ENCODE measurements at regions of chr1 and their contacts with region 1.

Region 1: GRCh38 chr1:67561704-67562113 is 123.3 kb upstream of the GADD45A start:
- DNase-seq: no peak
- H3K4me3 ChIP-seq: no peak overlapping the region
- H3K27me3 ChIP-seq: no peaks in the 10 kb centered on the region
- CTCF ChIP-seq: peak; percentile 90

Region 2: DNA sequence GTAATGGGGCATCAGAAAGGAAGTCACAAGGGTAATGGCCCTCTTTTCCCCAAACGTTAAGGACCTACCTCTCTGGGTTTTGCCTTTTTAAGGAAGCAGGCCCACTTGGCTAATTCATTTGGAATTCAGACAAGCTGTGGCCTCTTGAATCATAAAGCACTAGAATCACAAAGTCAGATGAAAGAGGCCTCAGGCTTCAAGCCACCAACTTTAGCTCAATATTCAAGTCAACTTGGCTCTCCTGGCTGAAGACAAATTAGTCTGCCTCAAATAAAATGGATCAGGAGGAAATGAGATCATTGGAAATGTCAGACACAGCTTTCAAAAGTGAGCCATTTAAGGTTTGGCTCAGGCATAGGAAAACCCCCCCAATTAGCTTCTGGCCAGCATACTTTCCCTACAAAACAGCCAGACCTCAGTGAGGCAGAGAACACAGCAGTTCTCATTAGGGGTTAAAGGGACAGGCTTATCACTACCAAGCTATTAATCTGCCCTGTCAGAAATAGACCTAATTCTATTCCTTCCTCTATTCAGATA is 542.0 kb before region 1 on chr1:
- CTCF ChIA-PET with region 1: no interaction called
- POLR2A ChIA-PET with region 1: no interaction called
- DNase-seq: peak; percentile 78
- H3K4me3 ChIP-seq: no peak overlapping the region
- H3K27me3 ChIP-seq: no peaks in the 10 kb centered on the region
- CTCF ChIP-seq: no peak

Region 3: DNA sequence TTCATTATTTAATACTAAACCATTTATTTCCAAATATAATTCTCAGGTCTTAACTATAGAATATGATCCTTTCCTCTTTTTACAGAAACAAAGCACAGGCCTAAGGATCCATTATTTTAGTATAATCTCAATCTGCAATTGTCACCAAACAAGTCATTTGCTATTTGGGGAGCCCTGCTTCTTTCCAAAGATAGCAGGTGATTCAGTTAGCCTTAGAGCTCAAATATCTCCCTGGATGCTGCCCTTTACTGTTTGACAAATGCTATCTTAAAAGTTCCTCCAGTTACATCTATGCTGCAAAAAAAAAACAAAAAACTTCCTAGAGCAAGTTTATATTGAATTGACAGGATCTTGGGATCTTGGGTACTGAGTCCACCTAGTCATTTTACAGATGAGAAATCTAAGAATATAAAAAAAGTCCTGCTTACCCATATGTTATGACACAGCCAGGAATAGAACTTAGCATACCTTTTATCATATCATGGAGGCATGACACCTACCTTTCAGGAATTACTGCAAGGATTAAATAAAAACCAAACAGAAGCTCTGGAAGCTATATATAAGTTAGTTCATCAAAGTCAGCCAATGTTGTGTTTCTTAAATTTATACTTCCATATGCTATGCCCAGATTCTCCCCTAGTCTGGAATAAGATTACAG is 140.7 kb before region 1 on chr1:
- CTCF ChIA-PET with region 1: no interaction called
- POLR2A ChIA-PET with region 1: no interaction called
- DNase-seq: no peak
- H3K4me3 ChIP-seq: no peak overlapping the region
- H3K27me3 ChIP-seq: no peaks in the 10 kb centered on the region
- CTCF ChIP-seq: no peak

Region 4: DNA sequence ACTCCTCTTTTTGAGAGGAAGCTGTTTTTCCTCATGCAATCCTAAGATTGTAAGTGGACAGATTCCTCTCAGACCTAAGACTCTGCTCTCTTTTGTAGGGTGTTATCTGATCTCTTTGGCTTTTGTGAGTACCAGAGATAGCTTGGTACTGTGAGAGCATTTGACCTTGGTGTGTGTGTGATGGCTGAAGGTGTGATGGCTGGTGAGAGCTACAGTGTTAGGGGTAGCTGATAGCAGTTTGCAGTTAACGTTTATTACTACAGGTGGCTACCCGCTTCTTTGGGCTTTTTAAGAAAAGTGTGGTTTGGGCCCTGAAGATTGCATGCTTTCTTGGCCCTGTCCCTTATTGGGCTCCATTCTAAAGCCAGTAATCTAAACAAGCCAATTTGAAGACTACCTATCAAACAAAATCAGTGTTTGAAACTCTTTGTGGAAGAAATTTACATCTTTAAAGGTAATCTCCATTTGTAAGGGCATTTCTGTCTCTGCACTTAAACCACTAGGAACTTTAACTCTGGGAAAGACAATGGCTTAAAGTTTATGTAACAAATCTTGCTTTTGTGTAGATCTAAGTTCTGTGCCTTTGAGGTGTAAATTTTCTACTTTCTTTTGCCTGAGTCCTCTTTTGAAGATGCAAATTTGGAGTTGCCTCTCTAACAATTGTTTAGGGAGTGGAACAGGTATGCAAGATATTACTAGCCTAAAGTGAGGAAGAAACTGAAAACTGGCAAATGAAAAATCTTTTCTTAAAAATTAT is 46.2 kb before region 1 on chr1:
- CTCF ChIA-PET with region 1: no interaction called
- POLR2A ChIA-PET with region 1: no interaction called
- DNase-seq: no peak
- H3K4me3 ChIP-seq: no peak overlapping the region
- H3K27me3 ChIP-seq: no peaks in the 10 kb centered on the region; the same call in 1 of the 2 replicates
- CTCF ChIP-seq: no peak

Region 5: DNA sequence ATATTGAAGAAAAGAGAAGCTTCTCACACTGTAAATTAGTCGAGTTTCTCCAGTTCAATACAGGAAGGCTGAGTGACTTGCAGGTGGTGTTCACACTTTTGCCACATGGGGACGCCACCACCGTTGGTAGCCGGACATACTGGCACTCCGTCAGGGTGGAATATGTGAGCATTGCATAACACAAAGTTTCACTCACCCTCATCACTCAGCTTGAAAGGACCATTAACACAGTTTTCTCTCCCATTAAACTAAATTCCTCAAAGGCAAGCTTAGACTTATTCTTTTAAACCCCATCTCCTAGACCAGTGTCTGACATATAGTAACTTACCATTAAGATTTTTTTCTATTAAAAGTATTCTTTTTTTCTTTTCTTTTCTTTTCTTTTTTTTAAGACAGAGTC is 26.2 kb before region 1 on chr1:
- CTCF ChIA-PET with region 1: interaction called, 31 read pairs
- POLR2A ChIA-PET with region 1: no interaction called
- DNase-seq: peak; percentile 45
- H3K4me3 ChIP-seq: no peak overlapping the region
- H3K27me3 ChIP-seq: no peaks in the 10 kb centered on the region
- CTCF ChIP-seq: peak; percentile 99

Region 6: DNA sequence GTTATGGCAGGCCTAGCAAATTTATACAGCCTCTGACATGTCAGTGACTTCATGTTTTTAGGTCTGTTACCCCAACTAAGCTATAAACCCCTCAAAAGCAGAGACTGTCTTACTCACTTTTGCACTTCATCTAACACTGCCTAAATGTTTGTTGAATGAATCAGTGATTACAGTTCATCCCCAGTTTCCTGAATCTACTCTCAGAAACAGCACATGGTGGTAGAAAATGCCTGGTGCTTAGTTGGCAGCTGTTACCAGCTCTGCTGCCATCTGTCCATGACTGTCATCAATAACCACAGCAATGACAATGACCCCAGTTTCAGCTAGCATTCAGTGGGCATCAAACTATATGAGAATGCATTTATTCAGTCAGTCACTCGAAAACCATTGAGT is 21.0 kb before region 1 on chr1:
- CTCF ChIA-PET with region 1: interaction called, 31 read pairs
- POLR2A ChIA-PET with region 1: no interaction called
- DNase-seq: no peak
- H3K4me3 ChIP-seq: no peak overlapping the region
- H3K27me3 ChIP-seq: no peaks in the 10 kb centered on the region
- CTCF ChIP-seq: no peak

Region 7: DNA sequence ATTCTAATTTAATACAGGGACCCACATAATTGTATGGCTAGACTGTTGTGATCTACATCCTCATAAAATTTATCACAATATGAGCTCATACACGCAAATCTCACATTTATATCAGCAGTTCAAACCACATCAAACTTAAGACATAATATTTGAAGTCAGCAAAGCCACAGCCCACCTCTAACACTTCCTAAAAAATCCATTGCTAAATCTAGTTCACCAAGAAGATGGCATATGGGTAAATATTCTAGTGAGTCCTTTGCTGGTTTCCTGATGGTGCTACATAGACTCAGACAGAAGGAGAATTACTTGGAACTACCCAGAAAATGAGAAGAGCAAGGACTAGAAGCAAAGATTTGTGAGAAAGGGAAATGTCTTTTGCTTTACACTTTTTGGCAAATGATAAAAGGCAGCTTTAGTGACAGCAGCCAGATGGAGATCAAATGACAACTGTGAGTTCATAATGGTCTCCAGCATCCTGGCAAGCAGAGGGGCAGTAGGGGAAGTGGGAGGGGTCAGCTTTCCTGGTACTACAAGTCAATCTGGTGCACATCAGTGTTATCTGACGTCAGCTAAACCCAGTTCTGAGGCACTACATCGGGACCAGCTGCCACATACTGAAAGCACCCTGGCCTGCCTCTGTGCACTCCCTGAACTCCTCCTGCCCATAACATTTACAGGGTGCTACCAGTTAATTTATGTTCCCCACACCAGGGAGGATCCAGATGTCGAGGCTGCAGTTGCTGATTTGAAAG is 112.7 kb after region 1 on chr1:
- CTCF ChIA-PET with region 1: interaction called, 18 read pairs
- POLR2A ChIA-PET with region 1: no interaction called
- DNase-seq: no peak
- H3K4me3 ChIP-seq: no peak overlapping the region
- H3K27me3 ChIP-seq: no peaks in the 10 kb centered on the region
- CTCF ChIP-seq: no peak

Region 8: DNA sequence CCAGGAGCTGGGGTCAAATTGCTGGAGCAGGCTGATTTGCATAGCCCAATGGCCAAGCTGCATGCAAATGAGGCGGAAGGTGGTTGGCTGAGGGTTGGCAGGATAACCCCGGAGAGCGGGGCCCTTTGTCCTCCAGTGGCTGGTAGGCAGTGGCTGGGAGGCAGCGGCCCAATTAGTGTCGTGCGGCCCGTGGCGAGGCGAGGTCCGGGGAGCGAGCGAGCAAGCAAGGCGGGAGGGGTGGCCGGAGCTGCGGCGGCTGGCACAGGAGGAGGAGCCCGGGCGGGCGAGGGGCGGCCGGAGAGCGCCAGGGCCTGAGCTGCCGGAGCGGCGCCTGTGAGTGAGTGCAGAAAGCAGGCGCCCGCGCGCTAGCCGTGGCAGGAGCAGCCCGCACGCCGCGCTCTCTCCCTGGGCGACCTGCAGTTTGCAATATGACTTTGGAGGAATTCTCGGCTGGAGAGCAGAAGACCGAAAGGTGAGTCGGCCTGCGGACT is 123.4 kb after region 1 on chr1 and contains the start of gene GADD45A:
- CTCF ChIA-PET with region 1: interaction called, 27 read pairs
- POLR2A ChIA-PET with region 1: interaction called, 3 read pairs
- DNase-seq: peak; percentile 97
- H3K4me3 ChIP-seq: peak within 1 kb of the TSS; percentile 85
- H3K27me3 ChIP-seq: no peaks in the 10 kb centered on the region
- CTCF ChIP-seq: no peak
- polyA plus RNA-seq, gene GADD45A: 27.4 and 32.1 TPM in 2 replicates

Region 9: DNA sequence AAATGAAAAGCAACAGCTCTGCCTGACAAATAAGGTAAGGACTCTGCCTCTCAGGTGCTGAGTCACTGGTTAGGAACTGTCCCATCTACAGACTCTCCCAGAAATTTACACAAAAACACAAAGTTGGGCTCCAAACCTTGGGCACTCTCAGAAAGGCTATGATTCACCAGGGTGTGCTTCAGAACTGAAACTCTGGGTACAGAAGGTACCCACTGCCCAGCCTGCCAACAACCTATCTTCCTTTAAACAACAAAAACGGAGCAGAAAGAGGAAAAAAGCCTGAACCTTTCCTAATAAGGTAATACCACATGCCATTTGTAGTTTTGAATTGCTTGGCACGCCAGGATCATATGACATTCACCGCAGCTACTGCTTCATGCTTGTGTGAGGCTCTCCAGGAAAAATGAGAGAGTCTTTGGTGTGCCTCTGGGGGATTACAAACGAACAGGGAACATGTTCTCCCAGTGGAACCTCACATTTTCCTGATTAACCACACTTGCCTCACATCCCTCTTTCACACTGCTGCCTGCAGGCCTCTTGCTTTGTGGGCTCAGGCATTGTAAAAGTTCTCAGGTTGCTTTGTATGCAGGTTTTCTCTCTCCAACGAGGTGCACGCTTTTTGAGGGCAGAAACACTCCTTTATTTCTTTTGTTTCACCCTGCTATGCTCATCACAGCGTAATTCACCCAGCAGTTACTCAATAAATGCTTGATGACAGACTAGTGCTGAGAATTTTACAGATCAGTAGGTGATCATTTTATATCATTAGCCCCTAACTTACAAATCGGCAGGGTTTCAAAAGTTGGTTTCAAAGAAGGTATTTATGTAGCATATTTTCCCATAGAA is 188.4 kb after region 1 on chr1:
- CTCF ChIA-PET with region 1: interaction called, 15 read pairs
- POLR2A ChIA-PET with region 1: no interaction called
- DNase-seq: no peak
- H3K4me3 ChIP-seq: peak overlapping the region; percentile 1; the same call in 1 of the 2 replicates
- H3K27me3 ChIP-seq: no peaks in the 10 kb centered on the region
- CTCF ChIP-seq: no peak